ENCODE measurements at regions of chr7 and their contacts with region 1.

Region 1: GRCh38 chr7:116809636-116810266 is 52.6 kb upstream of the CAPZA2 start:
- ATAC-seq: peak; percentile 76 to 89 (median 79)
- H3K4me3 ChIP-seq: no peak overlapping the region
- H3K27ac ChIP-seq: no peak overlapping the region
- H3K4me1 ChIP-seq: peaks cover 0 to 13% of the 10 kb centered on the region in 2 donors

Region 2: DNA sequence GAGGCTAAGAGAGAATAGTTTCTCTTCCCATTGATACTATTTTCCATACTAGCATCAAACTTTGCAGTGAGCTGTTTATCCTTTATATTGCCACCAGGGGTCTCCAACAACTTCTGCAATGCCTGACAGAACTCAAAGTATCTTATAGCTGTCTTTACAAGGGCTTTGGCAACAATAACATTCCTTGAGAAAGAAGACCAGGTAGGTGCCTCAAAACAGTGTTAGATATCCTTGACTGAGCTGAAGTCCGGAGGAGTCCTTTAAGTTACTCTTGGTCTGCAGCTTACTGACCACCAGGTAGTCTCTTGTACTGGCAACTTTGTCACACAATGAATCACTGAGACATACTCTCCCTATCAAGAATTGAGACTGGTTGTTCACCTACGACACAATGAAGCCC is 629.4 kb before region 1 on chr7:
- in situ Hi-C with region 1: loop called in 1 of 9 experiments (anchors 25 kb)
- ATAC-seq: peak in 3 of 8 experiments; percentile 73 to 75 (median 73)
- H3K4me3 ChIP-seq: no peak overlapping the region
- H3K27ac ChIP-seq: no peak overlapping the region
- H3K4me1 ChIP-seq: no peaks in the 10 kb centered on the region

Region 3: DNA sequence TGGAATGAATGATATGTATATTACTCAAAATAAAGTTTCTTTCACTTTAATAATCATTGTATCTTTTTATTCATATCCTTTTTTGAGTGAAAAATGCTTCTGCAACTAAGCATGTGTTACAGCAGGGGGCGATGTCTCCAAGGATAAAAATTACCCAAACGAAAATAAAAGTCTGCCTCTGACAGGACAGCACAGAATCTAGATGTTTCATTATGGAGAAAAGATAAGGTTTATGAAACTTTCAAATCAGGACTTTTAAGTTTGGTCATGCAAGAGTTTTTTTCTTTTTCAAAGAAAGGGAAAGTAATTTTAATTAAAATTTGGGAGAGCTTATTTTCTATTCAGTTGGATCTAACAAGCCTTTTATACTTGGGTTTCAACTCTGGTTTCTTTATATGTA is 551.0 kb before region 1 on chr7:
- in situ Hi-C with region 1: loop called in 7 of 9 experiments (anchors 25 kb)
- ATAC-seq: peak in 2 of 8 experiments; percentile 31 to 55
- H3K4me3 ChIP-seq: no peak overlapping the region
- H3K27ac ChIP-seq: no peak overlapping the region
- H3K4me1 ChIP-seq: no peaks in the 10 kb centered on the region

Region 4: DNA sequence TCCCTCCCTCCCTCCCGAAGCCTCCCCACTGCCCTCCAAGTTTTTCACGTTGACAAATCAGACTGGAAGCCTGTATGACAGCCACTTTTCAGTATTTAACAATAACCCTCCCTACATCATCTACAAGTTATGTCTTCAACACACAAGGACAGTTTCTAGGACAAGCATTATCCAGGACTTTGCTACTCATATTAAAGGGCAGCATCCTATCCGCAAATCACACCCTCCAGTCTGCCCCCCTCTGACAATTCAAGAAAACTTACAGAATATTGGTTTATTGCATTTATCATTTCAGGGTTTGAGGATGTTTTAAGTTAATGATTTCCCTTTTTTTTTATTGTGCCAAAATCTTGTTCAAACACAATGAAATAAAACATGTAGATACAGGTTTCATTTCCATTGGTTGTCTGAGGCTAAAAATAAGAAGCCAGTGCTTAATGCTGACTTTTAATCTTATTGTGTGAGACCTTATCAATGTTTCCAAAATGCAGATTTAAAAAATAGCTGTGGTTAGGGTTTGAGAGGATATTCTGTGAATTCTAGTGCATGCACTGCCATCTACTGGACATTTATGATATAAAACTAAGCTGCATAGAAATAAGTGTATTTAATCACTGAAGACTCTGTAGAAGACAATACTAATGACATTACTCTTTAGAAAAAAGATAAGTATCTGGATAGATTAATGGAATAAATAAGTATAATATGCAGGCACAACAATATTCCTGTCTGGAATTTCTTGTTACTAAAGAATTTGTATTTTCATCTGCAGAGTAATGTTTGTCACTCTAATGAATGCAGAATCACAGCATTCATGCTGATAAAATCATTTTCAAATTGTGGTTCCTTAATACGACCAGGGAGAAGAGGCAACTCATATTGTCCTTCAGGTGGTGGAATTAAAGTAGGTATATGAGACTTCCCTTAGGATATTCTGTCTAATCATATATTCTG is 220.8 kb before region 1 on chr7:
- in situ Hi-C with region 1: loop called in 8 of 9 experiments (anchors 5 to 25 kb)
- ATAC-seq: peak; percentile 31 to 82 (median 53)
- H3K4me3 ChIP-seq: no peak overlapping the region
- H3K27ac ChIP-seq: no peak overlapping the region
- H3K4me1 ChIP-seq: peaks cover 5 to 9% of the 10 kb centered on the region in 2 donors

Region 5: DNA sequence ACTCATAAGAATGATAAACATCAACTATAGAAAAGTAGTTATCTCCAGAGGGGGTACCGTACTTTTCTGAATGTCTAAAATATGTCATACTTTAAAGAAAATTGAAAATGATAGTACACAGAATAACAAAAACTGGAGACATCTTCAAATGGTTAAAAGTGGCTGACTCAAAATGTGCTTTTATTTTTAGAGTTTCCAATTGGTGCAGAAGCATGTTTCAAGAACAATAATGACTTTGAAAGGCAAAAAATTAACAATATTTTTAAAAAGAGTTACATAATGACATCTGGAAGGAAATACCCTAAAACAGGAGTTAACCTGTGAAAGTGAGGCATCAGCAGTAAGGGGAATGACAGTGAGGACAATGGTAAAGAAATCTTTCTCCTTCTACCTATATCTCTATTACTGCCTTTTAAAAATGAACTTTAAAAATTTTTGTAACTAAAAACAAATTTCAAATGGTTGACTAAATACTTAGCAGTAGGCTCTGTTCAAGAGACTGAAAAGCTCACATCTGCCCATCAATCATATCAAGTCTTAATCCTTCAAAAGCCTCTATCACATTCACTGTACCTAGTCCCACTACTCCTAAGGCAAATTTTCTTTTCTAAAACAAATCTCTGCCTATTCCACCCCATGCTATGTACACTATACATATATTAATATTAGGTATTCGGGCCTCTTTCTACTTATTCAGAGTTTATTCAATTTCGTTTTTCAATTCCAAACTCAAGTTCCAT is 614.5 kb after region 1 on chr7:
- in situ Hi-C with region 1: no loop called
- ATAC-seq: no peak
- H3K4me3 ChIP-seq: no peak overlapping the region
- H3K27ac ChIP-seq: no peak overlapping the region
- H3K4me1 ChIP-seq: no peaks in the 10 kb centered on the region